Motor neuron (in vitro differentiated cells): ENCODE measurements at regions of chr10 and their contacts with region 1.

Region 1: GRCh38 chr10:15433850-15434537 is 62.9 kb upstream of the FAM171A1 start:
- ATAC-seq: peak in 6 of 8 experiments; percentile 59 to 93 (median 78)
- H3K4me3 ChIP-seq: peak overlapping the region in 1 of 5 donors; percentile 8
- H3K27ac ChIP-seq: no peak overlapping the region
- H3K4me1 ChIP-seq: peaks cover 0 to 6% of the 10 kb centered on the region in 2 donors

Region 2: DNA sequence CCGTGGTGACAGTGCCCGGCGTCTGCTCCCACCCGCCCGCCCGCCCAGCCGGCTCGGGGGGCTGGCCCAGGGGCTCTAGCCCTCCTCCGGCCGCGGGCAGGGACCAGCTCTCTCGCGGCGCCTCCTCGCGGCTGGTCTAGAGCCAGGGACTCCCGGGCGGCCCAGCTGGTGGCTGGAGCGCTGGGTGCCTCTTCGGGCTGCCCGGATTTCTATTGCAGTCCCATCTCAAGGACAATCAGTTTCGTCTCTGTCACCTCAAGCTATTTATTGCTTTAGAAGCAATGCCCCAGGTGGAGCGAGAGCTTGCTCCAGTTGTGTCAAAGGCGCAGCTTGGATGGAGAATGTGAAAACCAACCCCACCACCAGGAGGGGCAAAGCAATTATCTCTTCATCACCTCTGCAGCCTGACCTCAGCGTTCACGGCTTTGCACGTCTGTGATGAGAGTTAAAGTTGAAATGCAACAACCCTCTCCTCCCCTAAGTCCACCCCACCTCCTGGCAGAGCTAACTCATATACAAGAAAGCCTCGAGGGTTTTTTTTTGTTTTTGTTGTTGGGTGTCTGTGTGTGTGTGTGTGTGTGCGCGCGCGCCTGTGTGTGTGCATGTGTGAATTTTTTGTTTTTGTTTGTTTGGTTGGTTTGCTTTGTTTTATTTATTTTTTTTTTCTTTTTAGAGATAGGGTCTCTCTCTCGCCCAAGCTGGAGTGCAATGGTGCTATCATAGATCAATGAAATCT is 286.1 kb after region 1 on chr10 and contains the start of gene ITGA8:
- in situ Hi-C with region 1: loop called in 8 of 9 experiments (anchors 10 to 25 kb)
- ATAC-seq: peak; percentile 44 to 90 (median 86)
- H3K4me3 ChIP-seq: peak within 1 kb of the TSS; percentile 41 to 59 (median 49)
- H3K27ac ChIP-seq: no peak within 1 kb of the TSS
- H3K4me1 ChIP-seq: peaks cover 0 to 5% of the 10 kb centered on the region in 2 donors
- total RNA-seq, gene ITGA8: 0.33 to 19.0 (median 1.3) TPM

Region 3: DNA sequence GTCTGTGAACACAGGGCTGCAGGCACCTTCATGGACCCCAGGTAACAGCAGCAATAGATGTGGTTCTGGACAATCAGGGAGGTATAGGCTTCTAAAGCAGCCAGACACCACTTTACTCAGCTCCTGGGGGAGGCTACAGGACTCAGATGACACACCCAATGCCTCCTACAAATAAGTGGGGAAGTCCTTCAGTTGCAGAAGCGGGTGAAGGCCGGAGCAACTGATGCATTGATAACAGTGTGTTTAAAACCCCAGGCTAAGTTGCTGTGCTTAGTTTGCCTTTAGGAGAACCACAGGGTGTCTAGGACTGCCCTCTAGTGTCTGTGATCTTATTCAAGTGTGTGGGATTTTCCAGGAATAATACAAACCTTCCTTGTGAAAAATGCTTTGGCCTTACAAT is 291.6 kb after region 1 on chr10:
- in situ Hi-C with region 1: loop called in 8 of 9 experiments (anchors 10 to 25 kb)
- ATAC-seq: peak; percentile 60 to 98 (median 76)
- H3K4me3 ChIP-seq: no peak overlapping the region
- H3K27ac ChIP-seq: no peak overlapping the region
- H3K4me1 ChIP-seq: peaks cover 0 to 6% of the 10 kb centered on the region in 2 donors

Region 4: GRCh38 chr10:15824498-15824897 is 390.5 kb after region 1 on chr10:
- in situ Hi-C with region 1: loop called in 1 of 9 experiments (anchors 10 kb)
- ATAC-seq: no peak
- H3K4me3 ChIP-seq: no peak overlapping the region
- H3K27ac ChIP-seq: no peak overlapping the region
- H3K4me1 ChIP-seq: no peaks in the 10 kb centered on the region